Activated naive CD4-positive, alpha-beta T cell treated with anti-CD3 and anti-CD28 coated beads for 36 hours (primary cell): ENCODE measurements at regions of chr6 and their contacts with region 1.

Region 1: DNA sequence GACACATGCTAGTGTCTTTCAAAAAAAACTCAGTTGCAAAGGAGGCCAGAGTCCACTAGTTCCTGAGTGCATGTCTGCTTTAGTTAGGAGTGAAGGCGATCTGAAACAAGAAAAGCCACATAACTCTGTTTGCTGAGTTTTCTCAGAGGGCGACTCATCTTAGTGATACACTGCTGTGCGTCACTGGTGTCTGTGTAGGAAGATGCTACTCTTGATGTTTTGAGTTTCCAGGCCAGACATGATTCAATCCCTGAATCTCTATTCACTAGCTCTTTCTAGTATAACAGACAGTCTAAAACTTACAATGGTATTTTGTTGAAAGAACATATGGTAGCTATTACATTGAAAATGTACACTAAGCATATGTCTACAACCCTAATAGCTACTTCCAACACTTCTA is 60.9 kb downstream of the GFRAL start:
- DNase-seq: no peak
- H3K4me3 Mint-ChIP-seq: no peak overlapping the region
- H3K27ac Mint-ChIP-seq: no peak overlapping the region
- H3K4me1 Mint-ChIP-seq: no peaks in the 10 kb centered on the region
- H3K27me3 Mint-ChIP-seq: no peaks in the 10 kb centered on the region

Region 2: GRCh38 chr6:55410674-55411073 is 22.5 kb after region 1 on chr6:
- CTCF ChIA-PET with region 1: no interaction called
- intact Hi-C with region 1: loop called (anchors 1 kb)
- DNase-seq: no peak
- H3K4me3 Mint-ChIP-seq: no peak overlapping the region
- H3K27ac Mint-ChIP-seq: no peak overlapping the region
- H3K4me1 Mint-ChIP-seq: no peaks in the 10 kb centered on the region
- H3K27me3 Mint-ChIP-seq: no peaks in the 10 kb centered on the region

Region 3: GRCh38 chr6:55449221-55449620 is 61.0 kb after region 1 on chr6:
- CTCF ChIA-PET with region 1: no interaction called
- intact Hi-C with region 1: no loop called
- DNase-seq: no peak
- H3K4me3 Mint-ChIP-seq: no peak overlapping the region
- H3K27ac Mint-ChIP-seq: no peak overlapping the region
- H3K4me1 Mint-ChIP-seq: no peaks in the 10 kb centered on the region
- H3K27me3 Mint-ChIP-seq: no peaks in the 10 kb centered on the region